ENCODE measurements at regions of chr15 and their contacts with region 1.

Region 1: DNA sequence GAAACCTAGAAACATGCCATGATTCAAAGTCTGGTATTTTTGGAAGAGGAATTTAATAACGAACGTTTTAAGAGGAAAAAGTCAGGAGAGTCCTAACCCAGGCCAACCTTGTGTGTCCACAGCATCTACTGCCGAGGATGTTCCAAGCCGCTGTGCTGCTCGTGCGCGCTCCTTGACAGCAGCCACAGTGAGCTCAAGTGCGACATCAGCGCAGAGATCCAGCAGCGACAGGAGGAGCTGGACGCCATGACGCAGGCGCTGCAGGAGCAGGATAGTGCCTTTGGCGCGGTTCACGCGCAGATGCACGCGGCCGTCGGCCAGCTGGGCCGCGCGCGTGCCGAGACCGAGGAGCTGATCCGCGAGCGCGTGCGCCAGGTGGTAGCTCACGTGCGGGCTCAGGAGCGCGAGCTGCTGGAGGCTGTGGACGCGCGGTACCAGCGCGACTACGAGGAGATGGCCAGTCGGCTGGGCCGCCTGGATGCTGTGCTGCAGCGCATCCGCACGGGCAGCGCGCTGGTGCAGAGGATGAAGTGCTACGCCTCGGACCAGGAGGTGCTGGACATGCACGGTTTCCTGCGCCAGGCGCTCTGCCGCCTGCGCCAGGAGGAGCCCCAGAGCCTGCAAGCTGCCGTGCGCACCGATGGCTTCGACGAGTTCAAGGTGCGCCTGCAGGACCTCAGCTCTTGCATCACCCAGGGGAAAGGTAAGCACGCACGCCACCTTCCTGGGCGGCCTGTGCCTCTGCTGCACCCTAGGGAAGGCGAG is 28.4 kb downstream of the PML start:
- DNase-seq: peak in 1 of 2 donors; percentile 22
- H3K4me3 ChIP-seq: no peak overlapping the region
- H3K27ac ChIP-seq: no peak overlapping the region
- H3K4me1 ChIP-seq: no peaks in the 10 kb centered on the region
- H3K27me3 ChIP-seq: no peaks in the 10 kb centered on the region
- CTCF ChIP-seq: no peak
- POLR2A ChIP-seq: no peak

Region 2: GRCh38 chr15:73558529-73558928 is 464.4 kb before region 1 on chr15:
- intact Hi-C with region 1: no loop called
- DNase-seq: no peak
- H3K4me3 ChIP-seq: no peak overlapping the region
- H3K27ac ChIP-seq: no peak overlapping the region
- H3K4me1 ChIP-seq: no peaks in the 10 kb centered on the region
- H3K27me3 ChIP-seq: no peaks in the 10 kb centered on the region
- CTCF ChIP-seq: no peak
- POLR2A ChIP-seq: no peak

Region 3: GRCh38 chr15:73700041-73700842 is 322.6 kb before region 1 on chr15:
- intact Hi-C with region 1: no loop called
- DNase-seq: peak; percentile 66 to 77
- H3K4me3 ChIP-seq: no peak overlapping the region
- H3K27ac ChIP-seq: no peak overlapping the region
- H3K4me1 ChIP-seq: peaks cover 10 to 12% of the 10 kb centered on the region in 2 donors
- H3K27me3 ChIP-seq: no peaks in the 10 kb centered on the region
- CTCF ChIP-seq: peak; percentile 72 to 84 (median 80)
- POLR2A ChIP-seq: no peak

Region 4: DNA sequence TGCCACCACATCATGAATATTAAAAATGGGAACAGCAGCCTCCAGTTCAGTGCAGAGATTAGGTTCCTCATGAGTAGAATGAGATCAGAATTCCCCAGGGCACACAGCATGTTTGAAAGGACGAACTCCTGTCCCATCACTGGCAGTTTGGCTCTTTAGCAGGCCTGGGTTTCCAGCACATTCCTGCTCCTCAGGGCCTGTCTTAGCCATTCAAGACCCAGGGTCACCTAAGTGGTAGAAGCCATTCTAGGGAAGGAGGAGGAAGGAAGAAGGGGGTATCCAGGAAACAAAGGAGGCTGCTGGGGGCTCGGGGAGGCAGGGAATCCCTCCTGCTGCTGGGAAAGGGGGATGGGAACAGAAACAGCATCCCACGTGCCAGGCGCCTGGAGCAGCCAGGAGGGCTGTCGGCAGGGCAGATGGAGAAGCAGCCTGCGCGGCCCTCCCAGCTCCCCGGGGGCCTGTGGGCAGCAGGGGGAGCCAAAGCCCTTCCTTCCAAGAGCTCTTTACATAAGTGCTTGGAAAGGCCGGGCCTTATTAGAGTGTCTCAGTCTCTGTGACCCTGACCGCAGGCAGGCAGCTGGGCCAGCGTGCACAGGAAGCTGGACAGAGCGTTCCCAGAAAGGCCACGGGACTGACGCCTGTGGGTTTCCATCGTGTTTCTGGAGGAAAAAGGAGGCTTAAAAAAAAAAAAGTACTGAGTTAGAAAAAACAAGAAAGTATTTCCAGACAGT is 71.9 kb before region 1 on chr15:
- intact Hi-C with region 1: no loop called
- DNase-seq: peak; percentile 63 to 90
- H3K4me3 ChIP-seq: no peak overlapping the region
- H3K27ac ChIP-seq: peak overlapping the region; percentile 91 to 99
- H3K4me1 ChIP-seq: peaks cover 7 to 12% of the 10 kb centered on the region in 2 donors
- H3K27me3 ChIP-seq: no peaks in the 10 kb centered on the region
- CTCF ChIP-seq: peak in 2 of 3 donors; percentile 51 to 59
- POLR2A ChIP-seq: no peak

Region 5: DNA sequence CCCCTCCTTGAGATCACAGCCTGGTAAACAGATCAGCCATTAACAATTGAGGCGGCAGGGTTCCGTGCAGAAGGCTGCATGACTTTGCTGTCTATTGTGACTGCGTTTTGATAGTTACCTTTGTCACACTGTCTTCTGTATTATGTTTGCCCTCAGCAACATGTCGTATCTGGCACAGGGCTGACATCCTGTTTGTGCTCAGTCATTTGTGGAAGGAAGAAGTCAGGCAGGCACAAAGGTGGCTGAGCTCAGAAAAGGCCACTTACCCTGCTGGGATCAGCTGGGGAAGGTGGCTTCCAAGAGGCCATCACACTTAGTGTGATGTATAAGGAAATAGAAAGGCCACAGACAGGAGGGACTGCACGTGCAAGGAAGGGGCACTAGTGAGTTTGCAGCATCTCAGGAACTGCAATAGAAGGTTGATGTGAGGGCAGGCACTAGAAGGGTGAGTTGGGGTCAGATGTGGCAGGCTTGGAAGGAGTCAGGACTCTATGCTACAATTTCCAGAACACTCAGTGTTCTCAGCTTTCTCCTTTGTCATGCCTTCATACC is 15.0 kb before region 1 on chr15:
- intact Hi-C with region 1: loop called (anchors 1 kb)
- DNase-seq: no peak
- H3K4me3 ChIP-seq: no peak overlapping the region
- H3K27ac ChIP-seq: peak overlapping the region; percentile 57 to 69
- H3K4me1 ChIP-seq: peaks cover 0 to 23% of the 10 kb centered on the region in 2 donors
- H3K27me3 ChIP-seq: no peaks in the 10 kb centered on the region
- CTCF ChIP-seq: no peak
- POLR2A ChIP-seq: no peak